ENCODE measurements at regions of chr9 and their contacts with region 1.

Region 1: GRCh38 chr9:21078717-21079116 is 975 bp upstream of the IFNB1 start:
- DNase-seq: no peak
- ATAC-seq: peak; percentile 79
- H3K4me3 ChIP-seq: no peak overlapping the region
- H3K27ac ChIP-seq: no peak overlapping the region
- H3K4me1 ChIP-seq: peaks cover 6% of the 10 kb centered on the region; the same call in 1 of the 2 replicates
- H3K27me3 ChIP-seq: no peaks in the 10 kb centered on the region
- CTCF ChIP-seq: 0 out of 6 replicates have a peak, but pooled peaks have one; percentile 3 to 15 (median 13)
- EP300 ChIP-seq: no peak
- POLR2A ChIP-seq: no peak
- RAD21 ChIP-seq: no peak

Region 2: DNA sequence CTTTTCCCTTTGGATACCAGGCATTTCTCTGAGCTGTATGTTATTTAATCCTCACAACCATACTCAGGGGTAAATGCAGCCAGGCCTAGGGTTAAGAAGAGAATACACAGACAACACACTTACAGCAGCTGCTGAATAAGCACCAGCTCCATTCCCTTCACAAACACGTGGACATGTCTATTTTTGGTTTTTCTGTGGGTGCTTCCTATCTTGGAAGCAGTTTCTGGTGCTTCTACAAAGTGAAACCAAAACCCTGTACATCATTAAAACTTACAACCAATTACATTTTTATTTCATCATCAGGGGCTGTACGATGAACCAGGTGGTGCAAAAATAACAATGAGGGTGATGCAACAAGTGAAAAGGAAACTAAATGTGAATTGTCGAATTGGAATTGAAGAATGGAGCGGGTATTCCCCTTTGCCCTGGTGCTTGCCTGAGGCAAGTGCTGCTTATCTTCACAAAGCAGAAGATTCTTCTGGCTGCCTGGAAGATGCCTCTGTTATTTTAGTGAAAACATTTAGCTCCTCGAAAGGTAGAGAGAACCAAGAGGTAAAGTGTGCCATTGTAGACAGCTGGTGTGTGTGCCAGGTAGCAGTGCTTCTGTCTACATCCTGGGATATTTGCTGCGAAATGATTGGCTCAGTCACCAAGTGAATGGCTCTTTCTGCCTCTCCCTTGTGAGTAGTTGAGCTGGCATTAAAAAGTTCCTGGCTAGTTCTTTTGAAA is 17.6 kb after region 1 on chr9:
- CTCF ChIA-PET with region 1: interaction called, 8 read pairs
- POLR2A ChIA-PET with region 1: no interaction called
- RAD21 ChIA-PET with region 1: no interaction called
- SMC1A ChIA-PET with region 1: interaction called, 10 read pairs
- in situ Hi-C with region 1: no loop called
- intact Hi-C with region 1: no loop called
- DNase-seq: peak; percentile 46
- ATAC-seq: peak; percentile 95
- H3K4me3 ChIP-seq: peak overlapping the region; percentile 13; the same call in 1 of the 2 replicates
- H3K27ac ChIP-seq: peak overlapping the region; percentile 6; the same call in 1 of the 2 replicates
- H3K4me1 ChIP-seq: peaks cover 6% of the 10 kb centered on the region
- H3K27me3 ChIP-seq: no peaks in the 10 kb centered on the region
- CTCF ChIP-seq: no peak
- EP300 ChIP-seq: no peak
- POLR2A ChIP-seq: 0 out of 2 replicates have a peak, but pooled peaks have one; percentile 19
- RAD21 ChIP-seq: no peak

Region 3: GRCh38 chr9:21102305-21102704 is 23.6 kb after region 1 on chr9:
- CTCF ChIA-PET with region 1: interaction called, 8 read pairs
- POLR2A ChIA-PET with region 1: no interaction called
- RAD21 ChIA-PET with region 1: interaction called, 10 read pairs
- SMC1A ChIA-PET with region 1: interaction called, 10 read pairs
- in situ Hi-C with region 1: no loop called
- intact Hi-C with region 1: no loop called
- DNase-seq: no peak
- ATAC-seq: no peak
- H3K4me3 ChIP-seq: no peak overlapping the region
- H3K27ac ChIP-seq: no peak overlapping the region
- H3K4me1 ChIP-seq: no peaks in the 10 kb centered on the region
- H3K27me3 ChIP-seq: no peaks in the 10 kb centered on the region
- CTCF ChIP-seq: no peak
- EP300 ChIP-seq: no peak
- POLR2A ChIP-seq: no peak
- RAD21 ChIP-seq: no peak